Activated CD4-positive, alpha-beta T cell treated with anti-CD3 and anti-CD28 coated beads, Interleukin-2, amount 10 ng/mL, durations not matched to agents 24 days and 14 days (primary cell): ENCODE measurements at regions of chr9 and their contacts with region 1.

Region 1: GRCh38 chr9:92963831-92964626 is 16.7 kb downstream of the FGD3 start:
- DNase-seq: peak; percentile 93
- H3K4me3 Mint-ChIP-seq: peak overlapping the region; percentile 92
- H3K27ac Mint-ChIP-seq: peak overlapping the region; percentile 98
- H3K4me1 Mint-ChIP-seq: peaks cover 48% of the 10 kb centered on the region
- H3K27me3 Mint-ChIP-seq: no peaks in the 10 kb centered on the region

Region 2: DNA sequence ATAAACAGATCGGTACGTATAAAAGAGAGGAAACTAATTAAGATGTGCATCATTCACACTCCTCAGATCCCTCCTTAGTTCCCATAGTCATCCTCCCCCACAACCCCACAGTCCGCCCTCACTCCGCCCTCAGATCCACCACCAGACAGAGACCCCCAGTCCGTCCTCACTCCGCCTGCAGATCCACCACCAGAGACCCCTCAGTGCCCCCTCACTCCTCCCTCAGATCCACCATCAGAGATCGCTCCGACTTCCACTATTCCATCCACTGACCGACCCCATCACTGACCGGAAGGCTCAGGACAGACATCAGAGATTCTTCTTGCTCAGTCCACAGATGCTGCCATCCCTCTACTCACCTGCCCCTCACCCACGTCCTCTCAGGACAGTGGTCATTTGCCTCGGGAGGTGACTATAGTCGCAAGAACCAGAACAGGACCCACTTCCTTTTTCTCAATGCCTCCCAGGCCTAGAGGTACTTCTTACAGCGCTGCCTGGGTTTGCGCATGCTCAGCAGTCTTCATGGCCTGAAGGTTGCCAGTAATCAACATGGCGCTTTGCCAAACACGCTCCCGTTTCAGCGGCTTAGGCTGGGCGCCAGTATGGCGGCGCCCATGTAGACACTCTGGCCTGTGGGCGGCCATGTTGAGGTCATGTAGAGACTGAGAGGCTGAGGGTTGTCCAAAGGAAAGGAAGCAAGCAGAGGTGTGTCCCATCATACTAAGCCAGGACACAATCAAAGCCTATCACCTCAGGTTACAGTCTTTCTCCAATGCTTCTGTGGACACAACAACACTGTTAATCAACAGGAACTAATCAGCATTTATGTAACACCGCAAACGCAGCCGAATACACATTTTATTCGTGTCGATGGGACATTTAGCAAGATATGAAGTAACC is 86.2 kb before region 1 on chr9 and contains the start of gene ZNF484:
- intact Hi-C with region 1: no loop called
- DNase-seq: peak; percentile 98
- H3K4me3 Mint-ChIP-seq: peak within 1 kb of the TSS; percentile 98
- H3K27ac Mint-ChIP-seq: peak within 1 kb of the TSS; percentile 95
- H3K4me1 Mint-ChIP-seq: peaks cover 33% of the 10 kb centered on the region
- H3K27me3 Mint-ChIP-seq: no peaks in the 10 kb centered on the region
- total RNA-seq, gene ZNF484: 7.3 and 7.7 TPM in 2 replicates

Region 3: DNA sequence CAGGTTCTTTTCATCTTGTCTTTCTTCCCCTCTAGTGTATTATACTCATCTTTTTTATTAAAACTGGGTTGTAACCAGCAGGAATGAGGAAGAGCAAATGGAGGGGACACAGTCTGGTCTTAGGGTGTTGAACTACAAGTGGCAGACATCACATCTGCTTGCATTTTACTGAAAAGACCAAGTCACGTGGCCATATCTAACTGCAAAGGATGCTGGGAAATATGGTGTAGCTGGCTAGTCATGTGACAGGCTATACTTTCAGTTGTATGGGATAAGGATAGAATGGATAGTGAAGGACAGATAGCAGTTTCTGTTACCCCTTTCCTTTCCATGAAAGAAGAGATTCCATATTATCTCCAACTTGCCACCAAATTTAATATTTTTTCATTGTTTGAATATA is 29.7 kb before region 1 on chr9:
- intact Hi-C with region 1: no loop called
- DNase-seq: no peak
- H3K4me3 Mint-ChIP-seq: no peak overlapping the region
- H3K27ac Mint-ChIP-seq: no peak overlapping the region
- H3K4me1 Mint-ChIP-seq: no peaks in the 10 kb centered on the region
- H3K27me3 Mint-ChIP-seq: peaks cover 21% of the 10 kb centered on the region

Region 4: DNA sequence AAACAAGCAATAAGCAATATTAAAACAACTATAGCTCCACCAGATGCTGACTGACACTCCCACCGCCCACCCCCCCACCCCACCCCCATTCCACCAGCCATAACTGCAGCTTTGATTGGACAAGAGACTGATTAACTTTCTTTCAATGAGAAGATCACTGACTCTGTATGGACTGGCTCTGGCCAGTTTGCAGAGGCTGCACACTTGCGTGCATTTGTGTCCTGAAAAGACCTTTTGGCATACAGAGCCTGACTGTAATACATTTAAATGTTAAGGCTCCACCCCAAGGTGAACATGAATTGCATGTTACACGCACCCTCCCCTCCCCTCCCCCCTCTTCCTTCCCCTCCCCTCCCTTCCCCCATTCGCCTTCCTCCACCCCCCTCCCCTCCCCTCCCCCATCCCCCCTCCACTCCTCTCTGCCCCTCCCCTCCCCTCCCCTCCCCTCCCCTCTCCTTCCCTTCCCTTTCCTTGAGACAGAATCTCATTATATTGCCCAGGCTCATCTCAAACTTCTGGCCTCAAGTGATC is 14.4 kb after region 1 on chr9:
- intact Hi-C with region 1: loop called (anchors 2 kb)
- DNase-seq: no peak
- H3K4me3 Mint-ChIP-seq: peak overlapping the region; percentile 14
- H3K27ac Mint-ChIP-seq: peak overlapping the region; percentile 70
- H3K4me1 Mint-ChIP-seq: peaks cover 54% of the 10 kb centered on the region
- H3K27me3 Mint-ChIP-seq: no peaks in the 10 kb centered on the region

Region 5: DNA sequence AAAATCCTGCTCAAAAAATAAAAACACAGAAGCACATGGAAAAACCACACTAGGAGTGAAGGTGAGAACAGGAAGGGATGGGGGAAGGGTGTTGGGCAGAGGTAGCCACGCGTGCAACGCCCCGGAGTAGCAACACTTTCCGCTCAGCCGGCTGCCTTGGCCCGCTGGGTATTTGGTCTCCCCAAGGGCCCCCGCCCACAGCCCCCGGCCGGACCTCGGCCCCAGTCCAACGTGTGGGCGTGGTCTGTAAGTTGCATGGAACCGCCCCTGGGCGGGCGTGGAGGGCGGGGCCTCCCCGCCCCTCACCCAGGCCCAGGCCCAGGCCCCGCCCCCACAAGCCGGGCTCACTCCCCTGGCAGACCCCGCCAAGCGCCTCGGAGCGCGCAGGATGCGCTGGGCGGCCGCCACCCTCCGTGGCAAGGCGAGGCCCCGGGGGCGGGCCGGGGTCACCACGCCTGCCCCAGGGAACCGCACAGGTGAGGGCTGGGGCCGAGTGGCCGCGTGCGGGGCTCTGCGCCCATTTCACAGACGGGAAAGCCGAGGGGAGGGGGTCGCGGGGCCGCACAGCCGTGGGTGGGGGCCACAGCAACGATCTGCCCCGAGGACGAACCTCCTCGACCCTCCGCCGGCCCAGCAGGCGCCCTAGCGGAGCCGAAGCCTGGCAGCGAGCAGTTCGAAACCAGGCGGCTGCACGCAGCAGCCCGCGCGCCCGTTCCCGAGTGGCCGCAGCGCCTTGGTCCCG is 94.5 kb after region 1 on chr9 and contains the start of gene SUSD3:
- intact Hi-C with region 1: loop called (anchors 2 kb)
- DNase-seq: peak; percentile 93
- H3K4me3 Mint-ChIP-seq: peak within 1 kb of the TSS; percentile 93
- H3K27ac Mint-ChIP-seq: peak within 1 kb of the TSS; percentile 96
- H3K4me1 Mint-ChIP-seq: peaks cover 38% of the 10 kb centered on the region
- H3K27me3 Mint-ChIP-seq: no peaks in the 10 kb centered on the region
- total RNA-seq, gene SUSD3: 38.3 and 40.9 TPM in 2 replicates

Region 6: DNA sequence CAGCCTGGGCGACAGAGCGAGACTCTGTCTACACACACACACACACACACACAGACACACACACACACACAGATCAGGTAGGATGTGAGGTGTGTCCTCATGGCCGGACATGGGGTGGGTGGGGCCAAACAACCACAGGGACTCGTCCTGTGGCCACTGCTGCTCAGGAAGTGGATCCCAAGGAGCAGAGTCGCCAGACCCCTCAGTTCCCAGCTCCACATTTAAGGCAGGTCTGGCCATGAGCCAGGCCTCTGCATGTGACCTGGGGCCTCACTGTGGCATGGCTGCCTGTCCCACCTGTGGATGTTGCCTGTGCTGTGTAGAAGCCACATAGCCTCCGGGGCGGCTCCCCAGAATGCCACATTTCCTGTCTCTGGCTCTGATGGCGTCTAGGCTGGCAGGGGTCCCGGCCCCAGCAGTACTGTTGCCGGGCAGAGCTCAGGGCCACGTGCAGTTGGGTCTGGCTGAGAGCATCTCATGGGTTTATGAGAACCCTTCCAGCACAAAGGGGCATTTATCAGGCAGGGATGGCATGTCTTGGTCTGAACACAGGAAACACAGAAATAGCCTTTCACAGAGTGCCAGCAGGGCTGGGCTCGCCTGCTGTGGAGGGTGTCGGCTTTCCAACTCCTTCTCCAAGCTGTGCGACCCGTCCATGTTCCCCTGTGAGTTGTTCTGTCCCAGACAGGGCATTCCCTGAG is 180.0 kb after region 1 on chr9:
- intact Hi-C with region 1: loop called (anchors 5 kb)
- DNase-seq: peak; percentile 85
- H3K4me3 Mint-ChIP-seq: peak overlapping the region; percentile 60
- H3K27ac Mint-ChIP-seq: peak overlapping the region; percentile 96
- H3K4me1 Mint-ChIP-seq: peaks cover 41% of the 10 kb centered on the region
- H3K27me3 Mint-ChIP-seq: no peaks in the 10 kb centered on the region

Region 7: DNA sequence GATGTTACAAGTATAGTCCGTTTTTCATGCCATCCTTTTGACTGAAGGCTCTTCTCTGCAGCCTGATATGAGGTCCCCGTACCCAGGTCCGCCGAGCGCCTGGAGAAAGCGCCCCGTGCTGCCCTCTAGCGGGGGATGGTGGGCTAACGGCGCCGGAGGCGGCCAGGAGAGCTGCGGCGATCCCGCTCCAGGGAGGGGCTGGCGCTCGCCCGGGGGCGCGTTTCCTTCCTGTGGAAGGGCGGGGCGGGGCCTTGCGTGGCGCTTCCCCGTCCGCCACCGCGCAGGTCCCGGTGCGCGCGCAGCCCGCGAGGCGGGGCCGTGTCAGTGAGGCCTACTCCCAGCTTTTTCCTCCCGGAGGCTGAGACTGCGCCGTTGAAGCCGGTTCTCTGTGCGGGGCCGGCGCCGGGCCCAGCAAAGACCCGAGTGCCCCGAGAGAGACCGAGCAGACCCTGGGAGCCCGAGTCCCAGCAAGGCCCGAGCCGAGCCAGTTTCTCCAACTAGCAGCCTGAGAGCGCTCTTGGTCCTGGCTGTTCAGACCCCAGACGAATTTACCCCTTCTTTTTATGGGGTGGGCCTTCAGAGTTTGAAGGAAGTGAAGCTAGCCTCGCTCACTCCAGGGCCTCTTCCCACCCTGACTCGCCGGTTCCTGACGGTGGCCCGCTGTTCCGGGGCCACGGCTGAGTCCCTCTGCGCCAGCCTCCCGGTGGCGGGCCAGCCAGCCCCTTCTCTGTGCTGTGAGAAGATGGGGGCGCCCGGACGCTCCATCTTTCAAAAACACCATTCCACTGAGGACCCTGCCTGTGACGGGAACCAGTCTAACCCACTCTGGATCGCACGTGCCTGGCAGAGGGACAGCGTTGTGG is 602.6 kb after region 1 on chr9:
- intact Hi-C with region 1: loop called (anchors 5 kb)
- DNase-seq: peak; percentile 100
- H3K4me3 Mint-ChIP-seq: peak overlapping the region; percentile 89
- H3K27ac Mint-ChIP-seq: peak overlapping the region; percentile 93
- H3K4me1 Mint-ChIP-seq: peaks cover 20% of the 10 kb centered on the region
- H3K27me3 Mint-ChIP-seq: no peaks in the 10 kb centered on the region